ENCODE measurements at regions of chr12 and their contacts with region 1.

Region 1: DNA sequence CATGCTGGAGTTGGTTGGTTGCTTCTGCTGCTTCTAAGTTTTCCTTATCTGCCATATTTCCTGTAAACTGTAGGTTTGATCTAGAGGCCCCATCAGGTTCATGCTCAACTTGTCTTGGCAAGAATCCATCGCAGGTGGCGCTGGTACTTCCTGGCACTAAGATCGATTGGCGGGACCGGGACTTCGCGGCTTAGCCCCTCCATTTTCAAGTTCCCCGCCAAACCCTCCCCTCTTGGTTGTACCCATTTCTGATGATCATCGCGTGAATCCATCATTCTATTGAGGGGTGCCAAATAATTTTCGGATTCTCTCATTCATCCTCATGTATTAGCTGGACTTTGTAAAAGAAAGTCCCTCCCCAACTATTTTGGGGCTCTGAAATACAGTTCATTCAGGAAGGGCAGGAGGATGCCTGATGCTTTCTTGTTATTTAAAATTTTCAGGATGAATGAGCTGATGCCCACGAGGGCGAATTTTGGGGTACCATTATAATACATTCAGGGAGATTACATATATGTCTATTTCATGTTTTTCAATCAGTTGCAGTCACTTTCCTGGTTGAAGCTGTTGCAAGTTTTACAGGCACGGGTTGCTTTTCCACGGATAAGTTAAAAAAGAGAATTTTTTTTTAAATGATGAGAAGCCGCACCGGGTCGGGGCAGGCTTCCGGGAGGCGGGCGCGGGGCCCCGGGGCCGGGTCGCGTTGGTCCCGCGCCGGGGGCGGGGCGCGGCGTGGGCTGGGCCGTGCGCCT is 395 bp upstream of the BRI3BP start:
- DNase-seq: peak in 1 of 3 donors; percentile 70
- ATAC-seq: peak; percentile 72 to 77
- H3K4me3 ChIP-seq: peak overlapping the region; percentile 90
- H3K27ac ChIP-seq: no peak overlapping the region
- H3K4me1 ChIP-seq: no peaks in the 10 kb centered on the region
- H3K27me3 ChIP-seq: no peaks in the 10 kb centered on the region

Region 2: GRCh38 chr12:125065021-125065795 is 72.2 kb after region 1 on chr12 and contains the start of gene AACS:
- intact Hi-C with region 1: loop called in 1 of 4 experiments (anchors 10 kb)
- DNase-seq: peak; percentile 79 to 92 (median 90)
- ATAC-seq: peak; percentile 97
- H3K4me3 ChIP-seq: peak within 1 kb of the TSS; percentile 73
- H3K27ac ChIP-seq: peak within 1 kb of the TSS; percentile 26
- H3K4me1 ChIP-seq: peaks cover 4% of the 10 kb centered on the region
- H3K27me3 ChIP-seq: no peaks in the 10 kb centered on the region
- total RNA-seq, gene AACS: 11.2 to 12.4 (median 11.7) TPM

Region 3: DNA sequence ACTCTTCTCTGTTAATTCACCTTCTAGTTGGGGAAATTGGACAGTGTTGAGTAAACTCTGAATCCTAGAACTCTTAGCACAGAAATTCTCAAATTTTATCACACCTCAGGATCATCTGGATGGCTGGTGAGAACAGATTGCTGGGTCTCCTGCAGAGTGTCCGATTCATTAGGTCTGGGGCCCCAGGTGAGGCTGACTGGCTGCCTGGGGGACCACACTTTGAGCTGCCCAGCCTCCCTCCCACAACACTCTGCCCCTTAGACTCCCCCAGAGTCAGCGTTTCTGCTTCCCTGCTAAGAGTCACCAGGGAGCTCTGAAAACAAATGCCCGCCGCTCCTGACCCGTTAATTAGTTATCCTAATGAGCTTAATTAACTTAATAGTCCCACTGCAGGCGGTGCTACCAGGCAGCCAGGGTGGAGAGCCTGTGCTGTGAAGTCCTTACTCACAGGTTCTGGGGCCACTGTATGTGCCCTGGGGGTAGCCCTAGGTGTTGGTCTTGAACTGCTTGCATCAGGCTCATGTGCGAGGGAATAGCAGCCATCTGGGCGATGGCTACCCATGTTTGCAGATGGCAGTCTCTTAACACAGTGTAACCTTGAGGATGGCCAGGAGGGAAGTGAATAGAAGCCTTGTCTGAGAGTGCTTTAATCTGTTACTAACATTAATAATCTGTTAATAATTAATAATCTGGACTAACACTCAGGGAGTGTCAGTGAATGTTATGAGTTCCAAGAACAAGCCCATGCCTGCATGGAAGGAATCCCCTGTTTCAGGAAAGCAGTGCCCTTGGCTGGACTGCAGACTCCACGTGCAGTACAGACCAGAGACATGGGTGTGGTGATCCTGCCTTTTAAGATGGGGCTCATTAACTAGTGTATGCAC is 107.7 kb after region 1 on chr12:
- intact Hi-C with region 1: no loop called
- DNase-seq: no peak
- ATAC-seq: no peak
- H3K4me3 ChIP-seq: no peak overlapping the region
- H3K27ac ChIP-seq: no peak overlapping the region
- H3K4me1 ChIP-seq: no peaks in the 10 kb centered on the region
- H3K27me3 ChIP-seq: no peaks in the 10 kb centered on the region